H1 (cell line): ENCODE measurements at regions of chr6 and their contacts with region 1.

Region 1: GRCh38 chr6:70884074-70884983 is 72.5 kb downstream of the B3GAT2 start:
- DNase-seq: peak; percentile 29 to 89
- H3K4me3 ChIP-seq: no peak overlapping the region
- H3K27ac ChIP-seq: no peak overlapping the region
- H3K4me1 ChIP-seq: peaks cover 5 to 17% (median 11%) of the 10 kb centered on the region in 4 experiments
- H3K27me3 ChIP-seq: no peaks in the 10 kb centered on the region
- CTCF ChIP-seq: peak; percentile 74 to 94 (median 82)
- EP300 ChIP-seq: no peak
- POLR2A ChIP-seq: no peak
- RAD21 ChIP-seq: peak; percentile 91 to 92

Region 2: DNA sequence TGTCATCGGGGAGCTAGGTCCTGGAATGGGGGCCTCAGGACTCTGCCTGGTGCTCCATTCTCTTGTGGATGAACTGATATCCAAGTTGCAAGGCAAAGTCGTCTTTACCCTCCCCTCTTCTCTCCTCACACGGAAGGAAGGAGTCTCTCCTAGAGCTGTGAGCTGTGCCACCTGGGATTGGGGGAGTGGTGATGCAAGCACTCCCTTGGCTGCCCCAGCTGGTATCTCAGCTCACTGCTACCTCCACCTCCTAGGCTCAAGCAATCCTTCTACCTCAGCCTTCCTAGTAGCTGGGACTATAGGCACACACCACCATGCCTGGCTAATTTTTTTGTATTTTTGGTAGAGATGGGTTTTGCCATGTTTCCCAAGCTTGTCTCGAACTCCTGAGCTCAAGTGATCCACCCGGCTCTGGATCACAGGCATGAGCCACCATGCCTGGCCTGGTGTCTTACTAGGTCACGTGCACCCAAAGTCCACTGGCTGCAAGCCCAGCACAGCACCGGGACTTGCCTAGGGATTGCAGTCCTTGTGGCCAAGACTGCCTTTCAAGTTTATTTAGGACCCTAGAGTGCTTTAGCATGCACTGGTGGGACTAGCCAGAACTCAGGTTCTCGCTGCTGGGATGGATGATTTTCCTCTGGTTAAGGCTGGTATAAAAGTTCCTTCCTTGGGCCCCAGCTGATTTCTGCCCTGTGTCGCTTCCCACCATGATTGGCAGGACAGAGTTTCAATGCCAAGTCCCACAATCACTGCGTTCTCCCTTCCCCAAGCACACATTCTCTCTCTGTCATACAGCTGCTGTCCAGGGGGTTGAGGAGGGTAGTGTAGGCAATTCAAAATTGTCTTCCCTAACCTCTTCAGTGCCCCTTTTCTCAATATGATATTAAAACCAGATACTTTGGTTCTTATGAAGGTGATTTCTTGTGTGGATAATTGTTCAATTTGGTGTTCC is 183.1 kb before region 1 on chr6:
- CTCF ChIA-PET with region 1: interaction called, 30 read pairs
- POLR2A ChIA-PET with region 1: no interaction called
- DNase-seq: no peak
- H3K4me3 ChIP-seq: no peak overlapping the region
- H3K27ac ChIP-seq: no peak overlapping the region
- H3K4me1 ChIP-seq: no peaks in the 10 kb centered on the region
- H3K27me3 ChIP-seq: no peaks in the 10 kb centered on the region
- CTCF ChIP-seq: no peak
- EP300 ChIP-seq: no peak
- POLR2A ChIP-seq: no peak
- RAD21 ChIP-seq: no peak

Region 3: GRCh38 chr6:70806086-70806485 is 78.2 kb before region 1 on chr6:
- CTCF ChIA-PET with region 1: interaction called, 10 read pairs
- POLR2A ChIA-PET with region 1: no interaction called
- DNase-seq: no peak
- H3K4me3 ChIP-seq: no peak overlapping the region
- H3K27ac ChIP-seq: no peak overlapping the region
- H3K4me1 ChIP-seq: no peaks in the 10 kb centered on the region
- H3K27me3 ChIP-seq: no peaks in the 10 kb centered on the region
- CTCF ChIP-seq: no peak
- EP300 ChIP-seq: no peak
- POLR2A ChIP-seq: no peak
- RAD21 ChIP-seq: no peak

Region 4: GRCh38 chr6:70864401-70864800 is 19.9 kb before region 1 on chr6:
- CTCF ChIA-PET with region 1: interaction called, 19 read pairs
- POLR2A ChIA-PET with region 1: interaction called, 3 read pairs
- DNase-seq: no peak
- H3K4me3 ChIP-seq: no peak overlapping the region
- H3K27ac ChIP-seq: no peak overlapping the region
- H3K4me1 ChIP-seq: peaks cover 0 to 8% (median 4%) of the 10 kb centered on the region in 4 experiments; a peak in 4 of 7 replicates
- H3K27me3 ChIP-seq: no peaks in the 10 kb centered on the region
- CTCF ChIP-seq: no peak
- EP300 ChIP-seq: peak in 1 of 2 experiments; percentile 28; a peak in 1 of 3 replicates
- POLR2A ChIP-seq: no peak
- RAD21 ChIP-seq: no peak

Region 5: DNA sequence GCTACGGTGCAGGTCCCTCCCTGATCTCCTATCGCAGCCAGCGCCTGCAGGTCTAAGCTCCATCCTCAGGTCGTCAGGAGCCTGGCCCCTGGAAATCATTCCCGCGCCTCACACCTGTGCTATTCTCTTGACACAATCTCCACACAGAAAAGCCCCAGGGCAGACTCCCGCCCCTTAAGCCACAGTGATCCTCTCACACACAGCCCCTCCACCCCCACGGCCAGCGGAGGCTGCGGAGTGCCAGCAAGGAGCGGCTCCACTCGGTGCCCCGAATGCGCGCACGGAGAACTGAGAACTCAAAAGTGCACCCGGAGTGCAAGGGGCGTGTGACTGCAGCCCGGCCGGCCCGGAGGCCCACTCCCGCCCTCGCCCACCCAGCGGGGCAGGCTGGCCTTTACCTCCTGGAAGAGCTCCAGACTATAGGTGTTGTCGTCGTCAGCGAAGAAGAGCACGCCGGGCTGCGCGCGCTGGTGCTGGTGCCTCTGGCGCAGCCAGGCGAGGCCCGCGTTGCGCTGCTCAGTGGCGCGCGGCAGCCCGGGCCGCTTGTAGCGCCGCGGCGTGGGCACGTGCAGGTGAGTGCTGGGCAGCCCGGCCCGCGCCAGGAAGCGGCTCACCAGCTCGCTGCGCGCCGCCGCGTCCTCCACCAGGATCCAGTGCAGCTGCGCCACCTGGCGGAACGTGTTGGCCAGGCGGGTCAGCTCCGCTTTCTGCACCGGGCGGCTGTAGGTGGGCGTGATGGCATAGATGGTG is 71.3 kb after region 1 on chr6:
- CTCF ChIA-PET with region 1: interaction called, 13 read pairs
- POLR2A ChIA-PET with region 1: no interaction called
- DNase-seq: peak; percentile 70 to 99
- H3K4me3 ChIP-seq: peak overlapping the region; percentile 16 to 68 (median 38)
- H3K27ac ChIP-seq: no peak overlapping the region
- H3K4me1 ChIP-seq: peaks cover 0 to 4% (median 1%) of the 10 kb centered on the region in 4 experiments; a peak in 4 of 7 replicates
- H3K27me3 ChIP-seq: peaks cover 14 to 51% (median 39%) of the 10 kb centered on the region in 4 experiments
- CTCF ChIP-seq: peak; percentile 95 to 98 (median 95)
- EP300 ChIP-seq: no peak; a peak in 1 of 3 replicates
- POLR2A ChIP-seq: no peak
- RAD21 ChIP-seq: peak; percentile 84 to 92

Region 6: DNA sequence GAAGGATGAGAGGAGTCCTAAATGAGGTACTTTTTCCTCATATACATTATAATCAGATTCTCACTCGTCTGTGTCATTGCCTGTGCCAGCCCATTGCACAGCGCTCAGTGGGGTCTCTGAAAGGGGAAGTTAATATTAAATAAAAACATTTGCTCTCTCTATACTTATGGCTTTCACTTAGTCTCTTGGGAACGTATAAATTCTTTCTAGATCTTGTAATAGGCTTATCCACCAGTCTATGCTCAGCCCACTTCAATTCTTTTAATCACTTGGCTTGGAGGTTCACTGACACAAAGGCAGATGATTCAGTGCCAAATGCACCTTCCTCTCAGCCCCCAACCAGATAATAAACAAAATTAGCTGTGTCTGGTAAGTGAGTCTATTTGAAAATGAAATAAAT is 240.0 kb after region 1 on chr6:
- CTCF ChIA-PET with region 1: no interaction called
- POLR2A ChIA-PET with region 1: no interaction called
- DNase-seq: no peak
- H3K4me3 ChIP-seq: no peak overlapping the region
- H3K27ac ChIP-seq: no peak overlapping the region
- H3K4me1 ChIP-seq: peaks cover 3 to 6% (median 5%) of the 10 kb centered on the region in 4 experiments; a peak in 4 of 7 replicates
- H3K27me3 ChIP-seq: no peaks in the 10 kb centered on the region
- CTCF ChIP-seq: no peak
- EP300 ChIP-seq: no peak
- POLR2A ChIP-seq: no peak
- RAD21 ChIP-seq: no peak